Right ventricle myocardium inferior (tissue), 1 donor: ENCODE measurements at regions of chr7 and their contacts with region 1.

Region 1: GRCh38 chr7:33650828-33651227 is 254.5 kb upstream of the BMPER start:
- DNase-seq: no peak
- ATAC-seq: no peak

Region 2: GRCh38 chr7:33604056-33604455 is 46.8 kb before region 1 on chr7:
- intact Hi-C with region 1: loop called (anchors 10 kb)
- DNase-seq: no peak
- ATAC-seq: no peak

Region 3: GRCh38 chr7:34019301-34019790 is 368.5 kb after region 1 on chr7:
- intact Hi-C with region 1: no loop called
- DNase-seq: no peak
- ATAC-seq: no peak